ENCODE measurements at regions of chrX and their contacts with region 1.

Region 1: GRCh38 chrX:120250522-120251271 is at the start of gene ZBTB33:
- DNase-seq: peak; percentile 95
- H3K4me3 Mint-ChIP-seq: peak within 1 kb of the TSS; percentile 88
- H3K27ac Mint-ChIP-seq: peak within 1 kb of the TSS; percentile 95
- H3K4me1 Mint-ChIP-seq: peaks cover 9% of the 10 kb centered on the region
- H3K27me3 Mint-ChIP-seq: no peaks in the 10 kb centered on the region
- total RNA-seq, gene ZBTB33: 14.4 and 14.6 TPM in 2 replicates

Region 2: GRCh38 chrX:120308959-120309872 is 58.5 kb after region 1 on chrX:
- intact Hi-C with region 1: loop called (anchors 1 kb)
- DNase-seq: peak; percentile 89
- H3K4me3 Mint-ChIP-seq: peak overlapping the region; percentile 74
- H3K27ac Mint-ChIP-seq: peak overlapping the region; percentile 13
- H3K4me1 Mint-ChIP-seq: peaks cover 18% of the 10 kb centered on the region
- H3K27me3 Mint-ChIP-seq: peaks cover 59% of the 10 kb centered on the region